ENCODE measurements at regions of chr1 and their contacts with region 1.

Region 1: GRCh38 chr1:201877877-201878401 is 10.8 kb upstream of the SHISA4 start:
- DNase-seq: peak in 1 of 2 donors; percentile 57
- ATAC-seq: peak; percentile 57 to 73 (median 66)
- H3K4me3 ChIP-seq: no peak overlapping the region
- H3K27ac ChIP-seq: peak overlapping the region in 8 of 10 donors; percentile 8 to 69 (median 47)
- H3K4me1 ChIP-seq: peaks cover 0 to 26% (median 14%) of the 10 kb centered on the region in 9 donors
- H3K27me3 ChIP-seq: no peaks in the 10 kb centered on the region
- CTCF ChIP-seq: peak; percentile 29 to 76 (median 67)

Region 2: GRCh38 chr1:201828820-201829774 is 48.8 kb before region 1 on chr1 and contains the start of gene IPO9:
- intact Hi-C with region 1: loop called in 3 of 10 experiments (anchors 5 kb)
- DNase-seq: peak; percentile 93 to 95
- ATAC-seq: peak; percentile 88 to 96 (median 93)
- H3K4me3 ChIP-seq: peak within 1 kb of the TSS; percentile 69 to 99 (median 84)
- H3K27ac ChIP-seq: peak within 1 kb of the TSS; percentile 51 to 97 (median 90)
- H3K4me1 ChIP-seq: peaks cover 10 to 75% (median 49%) of the 10 kb centered on the region in 9 donors
- H3K27me3 ChIP-seq: no peaks in the 10 kb centered on the region
- CTCF ChIP-seq: peak; percentile 93 to 100 (median 97)
- total RNA-seq, gene IPO9: 21.9 to 31.4 (median 27.2) TPM

Region 3: GRCh38 chr1:201955009-201955728 is 77.2 kb after region 1 on chr1 and contains the start of gene TIMM17A:
- intact Hi-C with region 1: loop called in 1 of 10 experiments (anchors 5 kb)
- DNase-seq: peak; percentile 94 to 97
- ATAC-seq: peak; percentile 99 to 100 (median 100)
- H3K4me3 ChIP-seq: peak within 1 kb of the TSS; percentile 66 to 94 (median 82)
- H3K27ac ChIP-seq: peak within 1 kb of the TSS; percentile 30 to 91 (median 84)
- H3K4me1 ChIP-seq: peaks cover 3 to 27% (median 16%) of the 10 kb centered on the region in 9 donors
- H3K27me3 ChIP-seq: no peaks in the 10 kb centered on the region
- CTCF ChIP-seq: peak in 2 of 9 donors; percentile 7 to 14
- total RNA-seq, gene TIMM17A: 71.1 to 113 (median 88.9) TPM

Region 4: DNA sequence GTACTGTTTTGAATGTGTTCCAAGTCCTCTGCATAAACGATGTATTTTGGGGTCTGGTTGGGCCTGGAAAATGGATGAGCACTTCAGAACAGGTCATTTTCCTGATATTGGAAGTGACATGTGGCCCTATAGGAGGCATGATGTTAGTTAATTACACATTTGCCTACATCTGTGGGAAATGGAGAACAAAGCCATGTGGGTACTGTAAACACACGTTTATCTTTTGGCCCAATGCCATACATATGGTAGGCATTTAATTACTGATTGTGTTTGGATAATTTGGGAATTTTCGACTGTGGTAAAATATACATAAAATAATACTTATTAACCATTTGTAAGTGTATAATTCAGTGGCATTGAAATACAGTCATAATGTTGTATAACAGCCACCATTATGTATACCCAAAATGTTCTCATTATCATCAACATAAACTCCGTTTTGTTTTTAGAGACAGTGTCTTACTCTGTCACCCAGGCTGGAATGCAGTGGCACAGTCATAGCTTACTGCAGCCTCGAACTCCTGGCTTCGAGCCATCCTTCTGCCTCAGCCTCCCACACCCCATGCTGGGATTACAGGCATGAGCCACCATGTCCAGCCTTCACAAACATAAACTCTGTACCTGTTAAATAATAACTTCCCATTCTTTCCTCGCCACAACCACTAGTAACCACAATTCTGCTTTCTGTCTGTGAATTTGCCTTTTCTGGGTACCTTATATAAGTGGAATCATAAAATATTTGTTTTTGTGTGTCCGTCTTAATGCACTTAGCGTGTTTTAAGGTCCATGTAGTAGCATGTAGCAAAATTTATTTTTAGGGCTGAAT is 92.6 kb after region 1 on chr1:
- intact Hi-C with region 1: loop called in 8 of 10 experiments (anchors 2 to 5 kb)
- DNase-seq: no peak
- ATAC-seq: peak in 1 of 8 donors; percentile 31
- H3K4me3 ChIP-seq: no peak overlapping the region
- H3K27ac ChIP-seq: peak overlapping the region in 1 of 10 donors; percentile 1
- H3K4me1 ChIP-seq: peaks cover 0 to 10% (median 3%) of the 10 kb centered on the region in 9 donors
- H3K27me3 ChIP-seq: no peaks in the 10 kb centered on the region
- CTCF ChIP-seq: no peak

Region 5: DNA sequence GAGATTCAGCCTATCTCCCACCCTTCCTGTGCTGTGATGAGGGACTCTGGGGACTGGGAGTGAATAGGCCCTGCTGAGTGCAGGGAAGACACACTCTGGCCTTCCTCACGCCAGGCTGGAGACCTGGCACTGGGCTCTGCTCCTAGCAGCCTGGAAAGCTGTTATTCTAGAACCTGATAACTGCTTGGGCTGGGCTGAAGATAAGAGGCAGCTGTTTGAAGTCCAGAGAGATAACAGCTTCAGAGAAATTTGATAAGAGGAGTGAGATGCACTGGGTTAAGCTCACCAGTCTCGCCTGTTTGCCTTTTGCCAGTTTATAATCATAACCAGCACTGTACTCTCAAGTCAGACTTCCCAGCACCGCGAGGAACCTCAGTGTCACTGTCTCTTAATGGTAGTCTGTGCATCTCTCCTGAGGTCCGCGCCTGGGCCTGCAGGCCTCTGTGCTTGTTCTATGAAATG is 198.1 kb after region 1 on chr1:
- intact Hi-C with region 1: no loop called
- DNase-seq: peak in 1 of 2 donors; percentile 18
- ATAC-seq: peak in 7 of 8 donors; percentile 33 to 81 (median 66)
- H3K4me3 ChIP-seq: no peak overlapping the region
- H3K27ac ChIP-seq: peak overlapping the region in 4 of 10 donors; percentile 20 to 61 (median 36)
- H3K4me1 ChIP-seq: peaks cover 0 to 22% (median 0%) of the 10 kb centered on the region in 9 donors
- H3K27me3 ChIP-seq: no peaks in the 10 kb centered on the region
- CTCF ChIP-seq: no peak